ENCODE measurements at regions of chr3 and their contacts with region 1.

Region 1: DNA sequence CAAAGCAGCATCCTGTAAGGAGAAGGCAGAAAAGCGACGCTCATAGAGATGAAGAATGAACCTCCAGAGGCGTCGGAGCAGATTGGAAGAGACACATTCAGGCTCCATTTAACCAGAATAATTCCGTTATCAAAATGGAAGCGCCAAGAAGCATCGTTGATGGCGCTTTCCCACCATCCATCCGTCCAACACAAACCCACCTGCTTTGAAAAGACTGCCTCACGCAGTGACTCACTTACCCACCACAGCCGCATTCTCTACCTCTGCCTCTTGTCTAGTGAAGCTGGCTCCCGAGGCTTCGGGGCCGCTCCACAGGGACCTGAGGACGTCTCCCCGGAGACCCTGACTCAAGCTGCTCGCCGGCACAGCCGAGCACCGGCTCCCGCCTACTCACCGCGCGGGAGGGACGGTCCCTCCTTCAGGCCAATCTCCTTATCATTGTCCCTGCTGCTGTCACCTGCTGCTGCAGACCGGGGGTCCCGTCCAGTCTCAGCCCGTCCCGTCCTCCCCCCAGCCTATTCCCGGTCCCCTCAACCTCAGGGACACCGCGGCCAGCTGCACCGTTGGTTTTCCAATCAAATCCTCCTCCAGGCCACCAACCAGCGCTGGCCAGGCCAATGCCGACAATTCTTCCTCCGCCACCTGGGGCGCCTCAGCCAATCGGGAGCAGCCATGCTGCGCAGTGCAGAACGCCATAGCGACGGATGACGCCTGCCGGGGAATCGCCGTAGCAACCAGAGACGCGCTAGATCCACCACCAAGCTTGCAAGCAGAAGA is at the start of gene NEK10:
- DNase-seq: peak; percentile 86 to 94 (median 91)
- ATAC-seq: peak; percentile 100
- H3K4me3 ChIP-seq: peak within 1 kb of the TSS; percentile 96
- H3K4me3 Mint-ChIP-seq: peak within 1 kb of the TSS; percentile 81 to 96 (median 93)
- H3K27ac ChIP-seq: peak within 1 kb of the TSS; percentile 11
- H3K27ac Mint-ChIP-seq: peak within 1 kb of the TSS; percentile 26 to 91 (median 85)
- H3K4me1 ChIP-seq: peaks cover 5 to 9% of the 10 kb centered on the region in 2 donors
- H3K4me1 Mint-ChIP-seq: peaks cover 7 to 18% (median 14%) of the 10 kb centered on the region in 7 donors
- H3K27me3 ChIP-seq: no peaks in the 10 kb centered on the region
- H3K27me3 Mint-ChIP-seq: peaks cover 0 to 4% (median 0%) of the 10 kb centered on the region in 5 donors
- total RNA-seq, gene NEK10: 0.64 to 2.0 (median 0.95) TPM

Region 2: GRCh38 chr3:27357665-27358258 is 11.3 kb before region 1 on chr3:
- CTCF ChIA-PET with region 1: interaction called, 3 read pairs
- POLR2A ChIA-PET with region 1: no interaction called
- intact Hi-C with region 1: loop called (anchors 1 kb)
- DNase-seq: peak in 8 of 9 donors; percentile 19 to 56 (median 41)
- ATAC-seq: peak; percentile 93
- H3K4me3 ChIP-seq: no peak overlapping the region
- H3K4me3 Mint-ChIP-seq: no peak overlapping the region
- H3K27ac ChIP-seq: no peak overlapping the region
- H3K27ac Mint-ChIP-seq: no peak overlapping the region
- H3K4me1 ChIP-seq: peaks cover 13 to 18% of the 10 kb centered on the region in 2 donors
- H3K4me1 Mint-ChIP-seq: peaks cover 0 to 31% (median 25%) of the 10 kb centered on the region in 7 donors
- H3K27me3 ChIP-seq: no peaks in the 10 kb centered on the region
- H3K27me3 Mint-ChIP-seq: peaks cover 0 to 20% (median 0%) of the 10 kb centered on the region in 5 donors

Region 3: GRCh38 chr3:27387625-27388024 is 18.6 kb after region 1 on chr3:
- CTCF ChIA-PET with region 1: no interaction called
- POLR2A ChIA-PET with region 1: no interaction called
- intact Hi-C with region 1: loop called in 1 of 2 experiments (anchors 2 kb)
- DNase-seq: no peak
- ATAC-seq: no peak
- H3K4me3 ChIP-seq: no peak overlapping the region
- H3K4me3 Mint-ChIP-seq: no peak overlapping the region
- H3K27ac ChIP-seq: no peak overlapping the region
- H3K27ac Mint-ChIP-seq: peak overlapping the region in 2 of 9 donors; percentile 54 to 60
- H3K4me1 ChIP-seq: no peaks in the 10 kb centered on the region
- H3K4me1 Mint-ChIP-seq: peaks cover 0 to under 1% (median 0%) of the 10 kb centered on the region in 7 donors
- H3K27me3 ChIP-seq: no peaks in the 10 kb centered on the region
- H3K27me3 Mint-ChIP-seq: no peaks in the 10 kb centered on the region

Region 4: GRCh38 chr3:27632431-27633223 is 263.6 kb after region 1 on chr3:
- CTCF ChIA-PET with region 1: no interaction called
- POLR2A ChIA-PET with region 1: no interaction called
- intact Hi-C with region 1: loop called (anchors 1 to 5 kb)
- DNase-seq: peak; percentile 21 to 56 (median 44)
- ATAC-seq: peak; percentile 92
- H3K4me3 ChIP-seq: peak overlapping the region; percentile 77
- H3K4me3 Mint-ChIP-seq: peak overlapping the region; percentile 92 to 99 (median 95)
- H3K27ac ChIP-seq: peak overlapping the region; percentile 70
- H3K27ac Mint-ChIP-seq: peak overlapping the region; percentile 88 to 99 (median 93)
- H3K4me1 ChIP-seq: peaks cover 0 to 18% of the 10 kb centered on the region in 2 donors
- H3K4me1 Mint-ChIP-seq: peaks cover 11 to 31% (median 29%) of the 10 kb centered on the region in 7 donors
- H3K27me3 ChIP-seq: no peaks in the 10 kb centered on the region
- H3K27me3 Mint-ChIP-seq: no peaks in the 10 kb centered on the region

Region 5: DNA sequence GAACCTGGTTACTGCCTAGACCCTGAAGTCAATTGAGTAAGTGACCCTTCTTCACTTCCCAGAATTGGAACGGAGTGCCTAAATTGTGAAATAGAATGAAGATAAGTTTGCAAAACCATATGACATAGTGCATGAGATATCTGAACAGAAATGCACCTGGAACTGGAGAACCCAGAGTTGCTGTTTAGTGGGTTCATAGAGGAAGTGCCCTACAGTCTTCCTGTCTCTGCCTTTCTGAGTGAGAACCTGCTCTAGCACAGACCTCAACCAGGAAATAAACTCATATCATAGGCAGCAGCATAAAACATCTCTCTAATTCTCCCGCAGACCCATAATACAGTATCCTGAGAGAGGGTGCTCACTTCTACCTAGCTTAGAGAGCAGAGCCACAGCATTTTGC is 270.3 kb after region 1 on chr3:
- CTCF ChIA-PET with region 1: no interaction called
- POLR2A ChIA-PET with region 1: no interaction called
- intact Hi-C with region 1: loop called in 1 of 2 experiments (anchors 5 kb)
- DNase-seq: peak in 6 of 9 donors; percentile 33 to 70 (median 61)
- ATAC-seq: peak; percentile 91
- H3K4me3 ChIP-seq: no peak overlapping the region
- H3K4me3 Mint-ChIP-seq: peak overlapping the region; percentile 18 to 75 (median 56)
- H3K27ac ChIP-seq: peak overlapping the region; percentile 65
- H3K27ac Mint-ChIP-seq: peak overlapping the region; percentile 74 to 93 (median 90)
- H3K4me1 ChIP-seq: peaks cover 11 to 18% of the 10 kb centered on the region in 2 donors
- H3K4me1 Mint-ChIP-seq: peaks cover 10 to 26% (median 21%) of the 10 kb centered on the region in 7 donors
- H3K27me3 ChIP-seq: no peaks in the 10 kb centered on the region
- H3K27me3 Mint-ChIP-seq: peaks cover 0 to 7% (median 0%) of the 10 kb centered on the region in 5 donors

Measured in naive thymus-derived CD4-positive, alpha-beta T cell (primary cell).